PC-3 (cell line): ENCODE measurements at regions of chr18 and their contacts with region 1.

Region 1: GRCh38 chr18:60549338-60549960 is 176.9 kb upstream of the MC4R start:
- DNase-seq: peak; percentile 87
- ATAC-seq: peak; percentile 59
- H3K4me3 ChIP-seq: peak overlapping the region; percentile 46; the same call in 1 of the 2 replicates
- H3K27ac ChIP-seq: no peak overlapping the region
- H3K4me1 ChIP-seq: no peaks in the 10 kb centered on the region
- H3K27me3 ChIP-seq: no peaks in the 10 kb centered on the region
- CTCF ChIP-seq: peak; percentile 81

Region 2: DNA sequence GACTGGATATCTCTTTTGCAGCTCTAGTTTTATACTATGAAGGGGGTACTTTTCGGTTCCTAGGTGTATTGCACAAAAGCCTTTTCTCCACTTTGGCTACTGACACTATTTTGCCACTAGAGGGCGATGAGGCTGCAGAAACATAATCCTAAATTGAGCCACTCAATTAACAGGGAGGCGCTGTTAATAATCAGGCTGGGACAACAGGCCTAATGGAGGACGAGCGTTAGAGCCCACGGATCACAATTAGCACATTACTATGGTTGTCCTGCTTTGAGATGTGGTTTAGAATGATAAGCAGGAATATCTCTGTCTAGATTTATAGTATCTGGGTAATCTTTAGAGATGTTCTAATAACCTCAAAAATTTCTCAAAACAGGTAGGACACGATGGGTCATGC is 711.9 kb before region 1 on chr18:
- CTCF ChIA-PET with region 1: no interaction called
- POLR2A ChIA-PET with region 1: no interaction called
- intact Hi-C with region 1: loop called (anchors 5 kb)
- DNase-seq: peak; percentile 88
- ATAC-seq: peak; percentile 87
- H3K4me3 ChIP-seq: no peak overlapping the region
- H3K27ac ChIP-seq: no peak overlapping the region
- H3K4me1 ChIP-seq: no peaks in the 10 kb centered on the region
- H3K27me3 ChIP-seq: no peaks in the 10 kb centered on the region
- CTCF ChIP-seq: peak; percentile 96

Region 3: GRCh38 chr18:60053747-60054304 is 495.6 kb before region 1 on chr18:
- CTCF ChIA-PET with region 1: interaction called, 3 read pairs
- POLR2A ChIA-PET with region 1: no interaction called
- intact Hi-C with region 1: loop called (anchors 10 kb)
- DNase-seq: peak; percentile 100
- ATAC-seq: peak; percentile 93
- H3K4me3 ChIP-seq: peak overlapping the region; percentile 42
- H3K27ac ChIP-seq: peak overlapping the region; percentile 97
- H3K4me1 ChIP-seq: peaks cover 36% of the 10 kb centered on the region
- H3K27me3 ChIP-seq: no peaks in the 10 kb centered on the region
- CTCF ChIP-seq: no peak

Region 4: DNA sequence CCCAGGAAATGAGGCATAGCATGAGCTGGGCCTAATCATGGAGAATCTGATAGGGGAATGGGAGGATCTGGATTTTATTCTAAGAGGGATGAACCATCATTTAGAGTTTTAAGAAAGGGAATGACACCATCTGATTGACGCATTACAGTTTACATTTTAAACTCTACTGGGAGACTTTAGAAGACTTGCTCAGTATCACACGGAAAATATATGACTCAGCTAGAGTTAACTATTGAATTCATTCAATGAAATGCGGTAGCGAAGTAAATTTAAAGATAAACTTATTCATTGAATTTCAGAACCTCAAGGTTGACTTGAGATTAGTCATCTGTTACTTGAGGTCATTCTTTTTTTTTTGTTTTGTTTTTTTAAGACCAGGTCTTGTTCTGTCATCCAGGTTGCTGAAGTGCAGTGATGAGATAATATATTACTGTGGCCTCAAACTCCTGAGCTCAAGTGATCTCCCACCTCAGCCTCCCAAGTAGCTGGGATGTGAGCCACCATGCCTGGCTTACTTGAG is 201.9 kb before region 1 on chr18:
- CTCF ChIA-PET with region 1: no interaction called
- POLR2A ChIA-PET with region 1: no interaction called
- intact Hi-C with region 1: loop called (anchors 5 kb)
- DNase-seq: peak; percentile 88
- ATAC-seq: peak; percentile 77
- H3K4me3 ChIP-seq: no peak overlapping the region
- H3K27ac ChIP-seq: peak overlapping the region; percentile 91
- H3K4me1 ChIP-seq: peaks cover 16% of the 10 kb centered on the region; the same call in 1 of the 2 replicates
- H3K27me3 ChIP-seq: no peaks in the 10 kb centered on the region
- CTCF ChIP-seq: no peak

Region 5: GRCh38 chr18:60413944-60414547 is 135.4 kb before region 1 on chr18:
- CTCF ChIA-PET with region 1: interaction called, 3 read pairs
- POLR2A ChIA-PET with region 1: no interaction called
- intact Hi-C with region 1: loop called (anchors 2 kb)
- DNase-seq: peak; percentile 53
- ATAC-seq: peak; percentile 89
- H3K4me3 ChIP-seq: no peak overlapping the region
- H3K27ac ChIP-seq: no peak overlapping the region
- H3K4me1 ChIP-seq: no peaks in the 10 kb centered on the region
- H3K27me3 ChIP-seq: no peaks in the 10 kb centered on the region
- CTCF ChIP-seq: peak; percentile 85